B cell (primary cell): ENCODE measurements at regions of chr5 and their contacts with region 1.

Region 1: DNA sequence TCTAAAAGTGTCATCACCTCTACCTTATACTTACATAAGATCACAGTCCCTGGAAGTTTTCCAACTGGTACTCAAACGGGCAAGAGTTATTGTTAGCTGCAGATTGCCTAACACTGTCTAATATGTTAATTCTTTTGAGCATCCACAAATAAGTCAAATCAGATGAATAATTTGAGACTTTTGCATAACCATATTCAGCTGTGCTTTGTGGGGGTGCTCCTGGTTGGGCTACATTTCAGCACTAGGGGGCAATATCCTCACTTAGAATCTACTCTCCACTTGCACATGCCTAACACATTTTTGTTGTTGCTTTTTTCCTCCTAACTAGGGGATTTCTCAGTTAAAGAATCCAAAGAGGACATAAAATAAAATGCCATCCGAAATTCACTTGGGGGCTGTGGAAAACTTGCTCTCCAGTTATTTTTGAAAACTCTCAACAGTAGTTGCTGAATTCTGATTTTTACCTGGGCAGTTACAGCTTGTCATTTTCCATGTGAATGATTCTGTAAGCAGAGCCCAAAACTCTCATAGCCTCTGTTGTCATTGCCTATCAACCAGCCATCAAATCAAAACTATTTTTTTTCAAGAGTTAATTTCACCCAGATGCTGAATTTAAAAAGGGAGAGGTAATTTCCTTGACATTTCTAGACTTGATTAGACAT is 71.5 kb downstream of the TRIM36 start:
- DNase-seq: peak; percentile 66
- ATAC-seq: peak; percentile 76
- H3K4me3 ChIP-seq: no peak overlapping the region
- H3K4me3 Mint-ChIP-seq: no peak overlapping the region
- H3K27ac ChIP-seq: no peak overlapping the region
- H3K27ac Mint-ChIP-seq: no peak overlapping the region
- H3K4me1 ChIP-seq: no peaks in the 10 kb centered on the region
- H3K4me1 Mint-ChIP-seq: peaks cover 2% of the 10 kb centered on the region
- H3K27me3 ChIP-seq: no peaks in the 10 kb centered on the region
- H3K27me3 Mint-ChIP-seq: peaks cover 3% of the 10 kb centered on the region
- CTCF ChIP-seq: peak; percentile 83

Region 2: GRCh38 chr5:115586601-115587048 is 488.5 kb after region 1 on chr5:
- CTCF ChIA-PET with region 1: interaction called, 4 read pairs
- POLR2A ChIA-PET with region 1: no interaction called
- intact Hi-C with region 1: loop called (anchors 5 kb)
- DNase-seq: peak; percentile 56
- ATAC-seq: peak; percentile 28
- H3K4me3 ChIP-seq: no peak overlapping the region
- H3K4me3 Mint-ChIP-seq: no peak overlapping the region
- H3K27ac ChIP-seq: no peak overlapping the region
- H3K27ac Mint-ChIP-seq: no peak overlapping the region
- H3K4me1 ChIP-seq: peaks cover 0 to 3% of the 10 kb centered on the region in 2 donors
- H3K4me1 Mint-ChIP-seq: peaks cover 2% of the 10 kb centered on the region
- H3K27me3 ChIP-seq: no peaks in the 10 kb centered on the region
- H3K27me3 Mint-ChIP-seq: no peaks in the 10 kb centered on the region
- CTCF ChIP-seq: peak; percentile 82